Tibial artery (tissue), 4 donors: ENCODE measurements at regions of chr13 and their contacts with region 1.

Region 1: DNA sequence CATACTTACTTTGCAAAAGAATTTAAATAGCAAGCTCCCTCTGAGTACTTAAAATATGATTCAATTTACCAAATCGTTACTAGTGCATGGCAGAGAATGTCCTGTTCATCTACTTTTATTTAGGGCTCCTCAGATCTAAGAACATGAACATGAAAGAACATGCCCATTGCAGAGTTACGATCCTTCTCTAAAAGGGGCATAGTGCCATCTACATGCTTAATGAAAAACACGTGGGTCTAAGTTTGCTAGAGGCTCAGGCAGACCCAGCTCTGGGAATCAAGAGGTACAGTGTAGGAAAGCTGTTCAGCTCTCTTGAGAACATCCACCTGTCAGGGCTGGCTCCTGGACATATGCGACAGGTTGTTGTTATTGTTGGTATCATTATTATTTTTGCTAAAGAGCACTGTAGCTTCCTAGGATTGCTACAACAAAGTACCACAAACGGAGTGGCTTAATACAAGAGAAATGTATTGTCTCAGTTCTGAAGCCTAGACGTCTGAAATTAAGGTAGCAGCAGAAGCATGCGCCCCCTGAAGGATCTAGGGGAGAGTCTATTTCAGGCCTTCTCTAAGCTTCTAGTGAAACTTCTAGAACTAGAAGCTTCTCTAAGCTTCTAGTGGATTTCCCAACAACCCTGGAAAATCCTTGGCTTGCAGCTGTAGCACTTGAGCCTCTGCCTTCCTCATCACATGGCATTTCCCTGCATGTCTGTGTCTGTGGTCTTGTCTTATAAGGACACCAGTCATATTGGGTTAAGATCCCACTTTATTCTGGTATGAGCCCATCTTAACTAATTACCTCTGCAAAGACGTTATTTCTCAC is 133.9 kb downstream of the DCT start:
- DNase-seq: no peak
- H3K4me3 ChIP-seq: no peak overlapping the region
- H3K27ac ChIP-seq: peak overlapping the region; percentile 39 to 87
- H3K4me1 ChIP-seq: peaks cover 0 to 39% (median 20%) of the 10 kb centered on the region in 4 donors
- H3K27me3 ChIP-seq: no peaks in the 10 kb centered on the region
- CTCF ChIP-seq: no peak

Region 2: DNA sequence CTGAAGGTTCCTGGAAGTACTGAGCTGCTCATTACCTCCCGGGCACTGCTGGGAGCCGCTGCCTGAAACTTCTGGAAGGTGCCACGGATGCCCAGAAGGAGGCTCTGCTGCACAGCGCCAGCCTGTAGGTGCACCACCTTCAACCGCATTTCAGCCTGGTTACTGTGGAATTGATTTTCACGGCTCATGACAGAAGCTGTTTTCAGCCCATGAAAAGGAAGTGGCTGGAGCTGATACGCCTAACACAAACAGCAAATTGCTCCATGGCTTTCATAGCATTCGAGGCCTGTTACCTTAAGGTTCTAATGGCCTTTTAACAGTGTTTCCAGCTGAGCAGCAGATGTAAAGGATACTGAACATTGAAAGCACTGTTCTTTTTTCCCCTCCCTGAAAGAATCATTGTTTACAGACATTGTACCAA is 1096.9 kb before region 1 on chr13:
- intact Hi-C with region 1: loop called (anchors 10 kb)
- DNase-seq: peak in 1 of 2 donors; percentile 80
- H3K4me3 ChIP-seq: no peak overlapping the region
- H3K27ac ChIP-seq: peak overlapping the region; percentile 49
- H3K4me1 ChIP-seq: peaks cover 0 to 52% (median 8%) of the 10 kb centered on the region in 4 donors
- H3K27me3 ChIP-seq: no peaks in the 10 kb centered on the region
- CTCF ChIP-seq: peak; percentile 34 to 43

Region 3: GRCh38 chr13:94268661-94269060 is 76.9 kb before region 1 on chr13:
- intact Hi-C with region 1: no loop called
- DNase-seq: no peak
- H3K4me3 ChIP-seq: no peak overlapping the region
- H3K27ac ChIP-seq: no peak overlapping the region
- H3K4me1 ChIP-seq: no peaks in the 10 kb centered on the region
- H3K27me3 ChIP-seq: no peaks in the 10 kb centered on the region
- CTCF ChIP-seq: no peak

Region 4: DNA sequence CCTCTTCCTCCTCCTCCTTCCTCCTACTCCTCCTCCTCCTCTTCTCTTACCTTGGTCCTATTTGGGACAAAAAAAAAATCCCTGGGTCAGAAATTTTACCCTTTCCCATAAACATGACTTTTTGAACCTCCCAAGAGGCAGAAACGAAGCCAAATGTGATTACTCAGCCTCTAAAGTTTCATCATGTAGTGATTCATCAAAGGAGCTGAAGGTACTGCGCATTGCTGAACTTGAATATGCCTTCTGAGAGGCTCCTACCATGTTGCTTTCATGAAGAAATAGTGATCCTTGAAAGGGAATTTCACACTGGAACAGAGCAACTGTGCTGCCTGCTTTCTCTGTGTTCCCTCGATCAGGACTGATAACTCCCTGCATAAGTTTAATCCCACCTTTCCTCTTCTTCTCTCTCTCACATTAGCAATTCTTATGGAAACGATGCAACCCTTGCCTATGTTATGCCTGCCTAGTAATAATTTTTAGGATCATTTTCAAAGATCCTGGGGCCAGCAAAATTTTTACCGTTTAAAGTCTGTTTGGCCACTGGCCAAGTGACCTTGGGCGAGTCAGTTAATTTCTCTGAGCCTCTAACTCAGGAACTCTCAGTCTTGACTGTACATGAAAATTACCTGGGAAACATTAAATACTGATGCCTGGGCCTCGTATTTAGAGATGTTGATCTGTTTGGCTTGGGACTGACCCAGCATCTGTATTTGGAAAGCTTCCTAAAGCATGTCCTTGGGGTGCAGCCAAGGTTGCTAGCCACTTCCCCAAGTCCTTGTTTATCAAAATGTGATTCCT is 15.6 kb before region 1 on chr13:
- intact Hi-C with region 1: loop called (anchors 2 kb)
- DNase-seq: peak in 1 of 2 donors; percentile 73
- H3K4me3 ChIP-seq: peak overlapping the region in 1 of 2 donors; percentile 11
- H3K27ac ChIP-seq: peak overlapping the region; percentile 68 to 69
- H3K4me1 ChIP-seq: peaks cover 0 to 58% (median 29%) of the 10 kb centered on the region in 4 donors
- H3K27me3 ChIP-seq: no peaks in the 10 kb centered on the region
- CTCF ChIP-seq: no peak

Region 5: DNA sequence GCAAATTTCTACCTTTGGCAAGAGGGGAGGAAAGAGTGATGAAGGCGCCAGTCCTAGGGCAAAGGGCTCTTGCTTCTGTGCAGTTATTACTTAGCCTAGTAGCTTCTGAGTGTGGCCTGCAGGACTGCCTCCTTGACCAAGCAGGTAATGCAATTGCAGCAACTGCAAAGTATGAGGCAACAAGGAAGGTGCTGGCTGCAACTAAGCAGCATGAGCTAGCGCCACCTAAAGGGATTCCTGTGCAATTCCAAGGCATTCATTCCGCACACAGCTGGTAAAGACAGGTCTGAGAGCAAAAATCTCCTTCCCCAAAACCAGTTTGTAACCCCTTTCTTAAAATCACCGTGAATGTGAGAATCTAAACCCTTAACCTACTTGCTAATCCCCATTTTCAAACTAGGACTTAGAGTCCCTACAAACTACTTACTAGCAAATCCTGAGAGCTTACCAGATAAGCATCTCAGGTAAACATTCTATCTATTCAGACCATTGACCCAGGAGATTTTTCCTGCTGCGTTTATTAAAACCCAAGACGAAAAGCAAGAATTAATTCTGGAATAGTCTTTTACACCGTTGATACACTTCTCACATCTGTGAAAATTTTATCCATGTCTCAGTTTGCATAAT is 71.0 kb after region 1 on chr13:
- intact Hi-C with region 1: no loop called
- DNase-seq: no peak
- H3K4me3 ChIP-seq: no peak overlapping the region
- H3K27ac ChIP-seq: no peak overlapping the region
- H3K4me1 ChIP-seq: no peaks in the 10 kb centered on the region
- H3K27me3 ChIP-seq: no peaks in the 10 kb centered on the region
- CTCF ChIP-seq: peak in 1 of 2 experiments; percentile 21

Region 6: GRCh38 chr13:94534166-94534565 is 188.6 kb after region 1 on chr13:
- intact Hi-C with region 1: no loop called
- DNase-seq: no peak
- H3K4me3 ChIP-seq: no peak overlapping the region
- H3K27ac ChIP-seq: no peak overlapping the region
- H3K4me1 ChIP-seq: no peaks in the 10 kb centered on the region
- H3K27me3 ChIP-seq: no peaks in the 10 kb centered on the region
- CTCF ChIP-seq: no peak